ENCODE measurements at regions of chr11 and their contacts with region 1.

Region 1: DNA sequence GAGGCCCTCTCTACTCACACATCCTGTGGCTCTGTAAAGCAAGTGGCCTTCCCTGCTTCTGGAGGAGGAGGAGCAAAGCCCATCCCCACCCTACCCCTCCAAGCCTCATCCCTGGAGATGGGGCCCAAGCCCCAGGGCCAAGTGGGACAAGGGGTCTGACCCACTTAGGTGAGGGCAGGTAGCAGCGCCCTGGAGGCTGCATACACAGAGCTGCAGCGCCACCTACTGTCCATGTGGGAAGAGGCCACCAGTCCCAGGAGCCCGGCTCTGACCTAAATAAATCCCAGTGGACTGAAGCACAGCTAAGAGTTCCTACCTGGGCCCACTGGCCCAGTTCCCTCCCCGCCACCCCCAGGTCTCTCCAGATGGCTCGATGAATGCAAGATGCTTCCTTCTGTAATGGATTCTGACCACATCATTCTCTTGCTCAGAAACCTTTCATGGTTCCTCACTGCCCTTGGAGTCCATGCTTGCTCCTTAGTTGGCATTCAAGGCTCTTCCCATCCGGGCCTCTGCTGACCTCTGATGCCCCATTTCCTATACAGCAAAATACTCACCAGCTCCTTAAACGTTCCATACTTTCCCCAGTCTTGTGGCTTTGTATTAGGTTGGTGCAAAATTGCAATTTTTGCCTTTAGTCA is 62.1 kb downstream of the THAP12 start:
- DNase-seq: peak; percentile 80
- H3K4me3 Mint-ChIP-seq: no peak overlapping the region
- H3K27ac Mint-ChIP-seq: no peak overlapping the region
- H3K4me1 Mint-ChIP-seq: peaks cover 9% of the 10 kb centered on the region
- H3K27me3 Mint-ChIP-seq: no peaks in the 10 kb centered on the region
- CTCF ChIP-seq: peak; percentile 93

Region 2: DNA sequence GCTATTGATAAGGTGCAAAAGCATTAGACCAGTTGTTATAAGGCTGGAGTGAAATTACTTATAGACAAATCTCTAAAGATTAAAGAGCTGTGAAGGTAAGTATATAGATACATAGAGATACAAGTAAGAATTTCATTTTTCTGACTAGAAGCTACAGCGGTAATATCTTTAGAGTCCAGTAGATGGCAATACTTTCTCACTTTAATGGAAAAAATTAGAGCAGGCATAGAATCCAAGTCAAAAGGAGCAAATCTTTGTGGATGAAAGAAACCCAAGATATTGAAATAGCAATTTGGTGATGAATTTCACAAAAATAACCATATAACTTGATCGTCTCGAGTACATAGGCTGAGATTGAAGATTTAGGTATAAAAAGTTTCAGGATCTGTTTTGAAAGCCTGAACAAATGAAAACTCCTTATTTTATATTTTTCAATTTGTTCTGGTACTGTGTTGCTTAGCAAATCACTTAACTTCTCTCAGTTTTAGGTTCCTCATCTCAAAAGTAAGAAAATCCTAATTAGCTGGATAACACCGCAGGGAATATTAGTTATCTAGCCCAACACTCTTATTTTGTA is 421.9 kb before region 1 on chr11:
- CTCF ChIA-PET with region 1: interaction called, 35 read pairs
- POLR2A ChIA-PET with region 1: no interaction called
- intact Hi-C with region 1: loop called (anchors 1 kb)
- DNase-seq: peak; percentile 54
- H3K4me3 Mint-ChIP-seq: no peak overlapping the region
- H3K27ac Mint-ChIP-seq: no peak overlapping the region
- H3K4me1 Mint-ChIP-seq: no peaks in the 10 kb centered on the region
- H3K27me3 Mint-ChIP-seq: no peaks in the 10 kb centered on the region
- CTCF ChIP-seq: peak; percentile 54

Region 3: GRCh38 chr11:76159983-76160661 is 158.7 kb before region 1 on chr11:
- CTCF ChIA-PET with region 1: interaction called, 3 read pairs
- POLR2A ChIA-PET with region 1: no interaction called
- intact Hi-C with region 1: loop called (anchors 5 kb)
- DNase-seq: no peak
- H3K4me3 Mint-ChIP-seq: no peak overlapping the region
- H3K27ac Mint-ChIP-seq: no peak overlapping the region
- H3K4me1 Mint-ChIP-seq: no peaks in the 10 kb centered on the region
- H3K27me3 Mint-ChIP-seq: peaks cover 11% of the 10 kb centered on the region
- CTCF ChIP-seq: no peak

Region 4: GRCh38 chr11:76194872-76195668 is 123.8 kb before region 1 on chr11:
- CTCF ChIA-PET with region 1: interaction called, 10 read pairs
- POLR2A ChIA-PET with region 1: no interaction called
- intact Hi-C with region 1: no loop called
- DNase-seq: no peak
- H3K4me3 Mint-ChIP-seq: no peak overlapping the region
- H3K27ac Mint-ChIP-seq: no peak overlapping the region
- H3K4me1 Mint-ChIP-seq: no peaks in the 10 kb centered on the region
- H3K27me3 Mint-ChIP-seq: no peaks in the 10 kb centered on the region
- CTCF ChIP-seq: no peak

Region 5: GRCh38 chr11:76259299-76259905 is 59.5 kb before region 1 on chr11:
- CTCF ChIA-PET with region 1: no interaction called
- POLR2A ChIA-PET with region 1: no interaction called
- intact Hi-C with region 1: no loop called
- DNase-seq: no peak
- H3K4me3 Mint-ChIP-seq: no peak overlapping the region
- H3K27ac Mint-ChIP-seq: no peak overlapping the region
- H3K4me1 Mint-ChIP-seq: no peaks in the 10 kb centered on the region
- H3K27me3 Mint-ChIP-seq: peaks cover 18% of the 10 kb centered on the region
- CTCF ChIP-seq: no peak

Region 6: GRCh38 chr11:76296731-76297542 is 21.9 kb before region 1 on chr11:
- CTCF ChIA-PET with region 1: interaction called, 16 read pairs
- POLR2A ChIA-PET with region 1: no interaction called
- intact Hi-C with region 1: no loop called
- DNase-seq: no peak
- H3K4me3 Mint-ChIP-seq: no peak overlapping the region
- H3K27ac Mint-ChIP-seq: no peak overlapping the region
- H3K4me1 Mint-ChIP-seq: no peaks in the 10 kb centered on the region
- H3K27me3 Mint-ChIP-seq: peaks cover 9% of the 10 kb centered on the region
- CTCF ChIP-seq: no peak

Region 7: DNA sequence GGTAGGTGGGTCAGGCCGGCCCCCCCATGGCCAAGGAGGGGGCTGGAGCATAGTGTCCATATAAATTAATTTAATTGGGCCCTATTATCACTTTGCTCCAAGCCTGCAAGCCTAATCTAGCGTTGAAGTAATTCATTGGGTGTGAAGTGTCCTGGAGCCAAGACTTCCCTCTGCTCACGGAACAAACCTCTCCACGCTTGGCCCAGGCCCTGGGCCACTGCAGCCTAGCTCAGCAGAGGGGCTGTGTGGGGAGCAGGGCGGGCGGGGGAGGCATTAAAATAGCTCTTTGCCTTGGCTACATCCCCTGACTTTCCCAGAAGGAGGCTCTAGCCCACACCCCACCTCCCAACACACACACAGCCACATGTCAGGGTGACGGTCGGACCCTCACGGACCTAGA is 11.5 kb before region 1 on chr11:
- CTCF ChIA-PET with region 1: interaction called, 11 read pairs
- POLR2A ChIA-PET with region 1: interaction called, 4 read pairs
- intact Hi-C with region 1: no loop called
- DNase-seq: no peak
- H3K4me3 Mint-ChIP-seq: no peak overlapping the region
- H3K27ac Mint-ChIP-seq: no peak overlapping the region
- H3K4me1 Mint-ChIP-seq: no peaks in the 10 kb centered on the region
- H3K27me3 Mint-ChIP-seq: peaks cover 1% of the 10 kb centered on the region
- CTCF ChIP-seq: no peak

Region 8: DNA sequence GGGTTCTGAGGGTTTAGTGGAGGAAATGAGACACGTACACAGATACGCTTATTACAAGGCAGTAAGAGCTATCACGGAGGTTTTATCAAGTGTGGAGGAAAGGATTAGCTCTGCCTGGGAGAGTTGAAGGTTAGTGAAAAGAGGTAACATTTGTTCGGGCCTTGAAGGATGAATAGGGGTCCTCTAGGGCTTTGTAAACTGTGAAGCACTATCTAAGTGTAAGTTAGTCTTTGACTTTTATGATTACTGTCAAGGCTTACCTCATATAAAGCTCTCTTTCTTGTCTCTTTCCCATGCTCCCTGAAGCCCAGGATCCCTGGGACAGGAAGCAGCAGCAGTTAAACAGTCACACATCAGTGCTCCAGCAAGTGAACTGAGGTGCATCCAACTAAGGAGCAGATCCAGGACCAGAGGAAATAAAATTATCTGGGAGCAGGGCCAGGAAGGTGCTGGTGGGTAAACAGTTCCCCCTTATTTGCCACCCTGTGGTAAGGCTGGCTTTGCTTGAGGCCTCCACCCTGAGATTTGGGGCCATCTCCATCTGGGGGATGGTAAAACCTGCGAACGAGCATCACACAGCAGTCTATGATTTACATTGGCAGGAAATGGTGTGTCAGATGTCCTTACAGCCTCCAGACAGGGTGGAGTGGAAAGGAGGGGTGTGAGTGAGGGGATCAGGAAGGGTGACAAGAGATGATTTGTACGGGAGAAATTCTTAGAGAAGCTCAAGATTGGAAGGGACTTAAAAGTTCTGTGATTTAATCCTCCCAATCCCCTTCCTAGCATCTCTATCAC is 89.5 kb after region 1 on chr11:
- CTCF ChIA-PET with region 1: no interaction called
- POLR2A ChIA-PET with region 1: no interaction called
- intact Hi-C with region 1: no loop called
- DNase-seq: no peak
- H3K4me3 Mint-ChIP-seq: no peak overlapping the region
- H3K27ac Mint-ChIP-seq: no peak overlapping the region
- H3K4me1 Mint-ChIP-seq: no peaks in the 10 kb centered on the region
- H3K27me3 Mint-ChIP-seq: peaks cover 19% of the 10 kb centered on the region
- CTCF ChIP-seq: no peak

Region 9: DNA sequence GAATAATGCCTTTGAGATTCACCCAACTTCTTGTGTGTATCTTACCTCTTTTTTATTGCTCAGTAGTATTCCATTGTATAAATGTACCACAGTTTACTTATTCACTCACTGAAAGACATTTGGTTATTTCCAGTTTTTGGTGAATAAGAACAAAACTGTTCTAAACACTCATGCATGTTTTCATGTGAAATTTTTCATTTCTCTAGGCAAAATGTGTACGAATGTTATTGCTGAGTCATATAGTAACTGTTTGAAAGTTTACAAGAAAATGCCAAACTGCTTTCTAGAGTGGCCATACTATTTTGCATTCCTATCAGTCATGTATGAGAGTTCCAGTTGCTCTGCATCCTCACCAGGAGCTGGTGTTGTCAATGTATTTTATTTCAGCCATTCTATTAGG is 117.2 kb after region 1 on chr11:
- CTCF ChIA-PET with region 1: no interaction called
- POLR2A ChIA-PET with region 1: no interaction called
- intact Hi-C with region 1: no loop called
- DNase-seq: no peak
- H3K4me3 Mint-ChIP-seq: no peak overlapping the region
- H3K27ac Mint-ChIP-seq: no peak overlapping the region
- H3K4me1 Mint-ChIP-seq: no peaks in the 10 kb centered on the region
- H3K27me3 Mint-ChIP-seq: no peaks in the 10 kb centered on the region
- CTCF ChIP-seq: no peak